ENCODE measurements at regions of chr17 and their contacts with region 1.

Region 1: GRCh38 chr17:81101614-81102306 is 63.5 kb upstream of the PVALEF start:
- DNase-seq: peak; percentile 97
- H3K4me3 Mint-ChIP-seq: no peak overlapping the region
- H3K27ac Mint-ChIP-seq: no peak overlapping the region
- H3K4me1 Mint-ChIP-seq: peaks cover 2% of the 10 kb centered on the region
- H3K27me3 Mint-ChIP-seq: no peaks in the 10 kb centered on the region

Region 2: GRCh38 chr17:79991140-79991923 is 1110.4 kb before region 1 on chr17:
- intact Hi-C with region 1: no loop called
- DNase-seq: peak; percentile 94
- H3K4me3 Mint-ChIP-seq: peak overlapping the region; percentile 79
- H3K27ac Mint-ChIP-seq: no peak overlapping the region
- H3K4me1 Mint-ChIP-seq: peaks cover 23% of the 10 kb centered on the region
- H3K27me3 Mint-ChIP-seq: peaks cover 6% of the 10 kb centered on the region

Region 3: GRCh38 chr17:80989586-80989913 is 112.2 kb before region 1 on chr17:
- intact Hi-C with region 1: loop called (anchors 1 kb)
- DNase-seq: no peak
- H3K4me3 Mint-ChIP-seq: peak overlapping the region; percentile 79
- H3K27ac Mint-ChIP-seq: no peak overlapping the region
- H3K4me1 Mint-ChIP-seq: peaks cover 20% of the 10 kb centered on the region
- H3K27me3 Mint-ChIP-seq: no peaks in the 10 kb centered on the region

Region 4: DNA sequence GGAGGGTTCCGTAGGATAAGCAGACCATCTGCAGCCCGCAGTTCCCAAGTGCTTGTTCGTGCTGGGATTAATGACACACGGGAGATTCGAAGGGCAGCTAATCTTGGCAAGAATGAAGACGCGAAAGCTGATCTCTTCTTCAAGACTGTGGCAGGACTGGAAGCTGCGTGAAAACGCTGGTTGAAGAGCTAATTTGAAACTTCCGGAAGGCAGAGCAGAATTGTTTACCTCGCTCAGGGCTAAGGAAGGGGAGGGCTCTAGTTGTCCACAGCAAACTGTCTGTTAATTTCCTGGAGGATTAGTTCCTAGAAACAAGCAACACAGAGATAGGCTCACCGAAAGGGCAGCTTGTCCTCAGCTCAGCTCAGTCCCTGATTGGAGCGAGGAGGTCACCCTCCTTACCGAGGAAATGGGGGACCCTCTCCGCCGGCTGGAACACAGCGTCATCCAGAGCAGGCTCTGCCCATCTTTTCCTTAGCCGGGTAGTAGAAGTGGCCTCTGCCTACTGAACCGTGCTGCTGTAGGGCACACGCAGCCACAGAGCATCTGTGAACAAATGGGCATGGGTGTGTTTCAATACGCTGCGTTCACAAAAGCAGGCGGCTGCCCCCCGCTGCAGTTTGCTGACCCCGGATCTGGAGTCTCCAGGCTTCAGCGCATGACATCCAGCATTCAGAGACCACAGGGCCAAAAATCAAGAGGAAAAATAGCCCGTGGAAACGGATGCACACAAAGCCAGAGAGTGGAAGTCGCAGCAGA is 83.5 kb before region 1 on chr17:
- intact Hi-C with region 1: loop called (anchors 1 kb)
- DNase-seq: peak; percentile 86
- H3K4me3 Mint-ChIP-seq: peak overlapping the region; percentile 72
- H3K27ac Mint-ChIP-seq: peak overlapping the region; percentile 95
- H3K4me1 Mint-ChIP-seq: peaks cover 30% of the 10 kb centered on the region
- H3K27me3 Mint-ChIP-seq: no peaks in the 10 kb centered on the region

Region 5: GRCh38 chr17:81189670-81190530 is 88.1 kb after region 1 on chr17:
- intact Hi-C with region 1: no loop called
- DNase-seq: no peak
- H3K4me3 Mint-ChIP-seq: no peak overlapping the region
- H3K27ac Mint-ChIP-seq: no peak overlapping the region
- H3K4me1 Mint-ChIP-seq: no peaks in the 10 kb centered on the region
- H3K27me3 Mint-ChIP-seq: no peaks in the 10 kb centered on the region

Measured in activated CD4-positive, alpha-beta T cell treated with anti-CD3 and anti-CD28 coated beads, Interleukin-2, amount 10 ng/mL, durations not matched to agents 24 days and 14 days (primary cell).